PC-3 (cell line): ENCODE measurements at regions of chr1 and their contacts with region 1.

Region 1: DNA sequence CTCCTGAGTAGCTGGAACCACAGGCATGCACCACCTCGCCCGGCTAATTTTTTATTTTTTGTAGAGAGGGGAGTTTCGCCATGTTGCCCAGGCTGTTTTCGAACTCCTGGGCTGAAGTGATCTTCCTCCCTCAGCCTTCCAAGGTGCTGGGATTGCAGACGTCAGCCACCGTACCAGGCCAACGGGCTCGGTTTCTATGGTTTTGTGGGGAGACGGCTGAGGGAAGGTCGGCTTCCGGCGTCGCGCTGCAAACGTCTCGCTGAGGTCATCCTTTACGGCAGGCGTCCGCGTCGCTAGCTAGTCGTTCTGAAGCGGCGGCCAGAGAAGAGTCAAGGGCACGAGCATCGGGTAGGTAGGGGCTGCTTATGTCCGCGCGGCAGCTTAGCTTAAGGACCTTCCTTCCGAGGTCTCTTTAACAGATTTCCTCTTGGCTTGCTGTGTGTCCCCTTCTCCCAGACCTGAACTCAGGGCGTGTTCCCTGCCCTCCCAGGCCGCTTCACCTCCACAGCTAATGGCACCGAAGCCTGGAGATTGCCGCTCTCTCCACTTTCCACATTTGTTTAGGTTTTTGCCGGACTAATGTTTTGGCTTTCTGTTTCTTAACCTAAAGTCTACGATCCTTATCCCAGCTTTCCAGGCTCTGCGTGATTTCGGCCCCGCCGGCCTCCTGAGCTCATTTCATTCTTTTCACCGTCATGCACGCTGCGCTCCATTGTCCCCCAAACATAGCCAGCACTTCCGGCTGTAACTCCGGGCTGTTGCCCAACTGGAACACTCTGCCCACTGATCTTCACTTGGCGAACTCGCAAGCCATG is at the start of gene NDUFS5:
- DNase-seq: peak; percentile 88
- ATAC-seq: peak; percentile 90
- H3K4me3 ChIP-seq: peak within 1 kb of the TSS; percentile 94
- H3K27ac ChIP-seq: peak within 1 kb of the TSS; percentile 81
- H3K4me1 ChIP-seq: 0 out of 2 replicates have a peak, but pooled peaks cover 9% of the 10 kb centered on the region
- H3K27me3 ChIP-seq: no peaks in the 10 kb centered on the region
- CTCF ChIP-seq: no peak
- total RNA-seq, gene NDUFS5: 760 and 864 TPM in 2 replicates

Region 2: GRCh38 chr1:38964140-38964548 is 62.1 kb before region 1 on chr1:
- CTCF ChIA-PET with region 1: no interaction called
- POLR2A ChIA-PET with region 1: no interaction called
- intact Hi-C with region 1: no loop called
- DNase-seq: peak; percentile 38
- ATAC-seq: peak; percentile 77
- H3K4me3 ChIP-seq: no peak overlapping the region
- H3K27ac ChIP-seq: no peak overlapping the region
- H3K4me1 ChIP-seq: peaks cover 21% of the 10 kb centered on the region
- H3K27me3 ChIP-seq: no peaks in the 10 kb centered on the region
- CTCF ChIP-seq: peak; percentile 48

Region 3: DNA sequence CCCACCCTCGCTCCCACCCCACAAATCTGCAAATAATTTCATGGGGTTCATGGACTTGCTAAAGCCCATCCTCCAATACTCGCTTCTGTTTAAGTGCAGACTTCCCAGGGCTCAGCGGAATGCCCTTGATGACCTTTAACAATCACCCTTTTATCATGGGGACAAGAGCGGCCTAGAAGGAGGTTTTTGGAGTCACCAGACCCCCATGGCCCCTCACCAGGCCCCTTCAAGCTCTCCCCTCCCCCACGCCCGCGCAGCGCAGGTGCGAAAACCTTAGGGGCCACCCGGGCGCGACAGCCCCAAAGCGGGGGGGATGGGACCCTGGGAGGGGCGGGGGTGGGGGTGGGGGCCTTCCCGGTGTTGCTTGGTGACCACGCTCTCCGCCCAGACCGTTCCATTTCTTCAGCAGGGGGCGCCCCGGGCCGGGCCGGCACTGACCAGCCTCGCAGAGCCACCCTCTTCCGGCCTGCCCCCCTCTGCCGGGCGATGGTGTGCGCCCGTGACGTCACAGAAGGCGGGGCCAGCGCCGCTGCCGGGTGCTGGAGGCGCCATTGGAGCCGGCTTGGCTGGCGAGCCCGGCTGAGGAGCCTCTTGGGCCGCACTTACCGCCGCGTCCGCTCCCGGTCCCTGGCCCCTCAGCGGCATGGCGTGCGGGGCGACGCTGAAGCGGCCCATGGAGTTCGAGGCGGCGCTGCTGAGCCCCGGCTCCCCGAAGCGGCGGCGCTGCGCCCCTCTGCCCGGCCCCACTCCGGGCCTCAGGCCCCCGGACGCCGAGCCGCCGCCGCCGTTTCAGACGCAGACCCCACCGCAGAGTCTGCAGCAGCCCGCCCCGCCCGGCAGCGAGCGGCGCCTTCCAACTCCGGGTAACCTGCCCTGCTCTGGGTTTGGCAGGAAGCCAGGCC is 35.3 kb before region 1 on chr1 and contains the start of gene AKIRIN1:
- CTCF ChIA-PET with region 1: no interaction called
- POLR2A ChIA-PET with region 1: interaction called, 3 read pairs
- intact Hi-C with region 1: loop called (anchors 5 kb)
- DNase-seq: peak; percentile 97
- ATAC-seq: peak; percentile 77
- H3K4me3 ChIP-seq: peak within 1 kb of the TSS; percentile 91
- H3K27ac ChIP-seq: peak within 1 kb of the TSS; percentile 46
- H3K4me1 ChIP-seq: peaks cover 39% of the 10 kb centered on the region
- H3K27me3 ChIP-seq: no peaks in the 10 kb centered on the region
- CTCF ChIP-seq: no peak
- total RNA-seq, gene AKIRIN1: 58.6 and 77.3 TPM in 2 replicates